ENCODE measurements at regions of chr3 and their contacts with region 1.

Region 1: DNA sequence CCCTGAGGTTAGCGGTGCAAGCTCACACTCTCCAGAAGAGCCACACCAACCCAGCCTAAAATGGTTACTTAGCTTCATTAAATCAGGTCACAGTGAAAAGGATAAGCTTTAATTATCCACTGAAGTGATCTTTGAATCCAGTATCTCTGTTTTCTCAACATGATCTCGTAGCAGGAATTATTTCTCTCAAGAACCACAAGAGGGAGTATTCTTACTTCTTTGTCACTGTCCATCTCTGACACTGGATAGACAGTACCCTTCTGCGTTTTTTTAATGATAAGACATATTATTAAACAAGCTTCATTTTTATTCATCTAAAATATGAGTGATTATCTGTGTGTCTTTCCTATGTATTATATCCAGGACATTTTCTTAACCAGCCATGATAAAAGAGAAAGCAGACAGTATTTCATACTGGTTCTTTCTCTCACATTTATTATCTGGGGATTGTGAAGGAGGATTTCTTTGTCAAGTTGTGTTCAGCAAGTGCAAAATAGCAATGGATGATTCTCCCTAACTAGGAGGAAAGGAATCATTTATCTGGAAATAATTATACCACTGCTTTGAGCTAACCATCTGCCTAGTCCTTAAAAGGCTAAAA is 105.4 kb upstream of the CCDC54 start:
- DNase-seq: no peak
- ATAC-seq: peak; percentile 50 to 56
- H3K4me3 ChIP-seq: no peak overlapping the region
- H3K27ac ChIP-seq: no peak overlapping the region
- H3K4me1 ChIP-seq: no peaks in the 10 kb centered on the region
- H3K27me3 ChIP-seq: no peaks in the 10 kb centered on the region

Region 2: GRCh38 chr3:107416145-107416544 is 144.3 kb after region 1 on chr3:
- intact Hi-C with region 1: loop called in 3 of 4 experiments (anchors 5 to 10 kb)
- DNase-seq: no peak
- ATAC-seq: no peak
- H3K4me3 ChIP-seq: no peak overlapping the region
- H3K27ac ChIP-seq: no peak overlapping the region
- H3K4me1 ChIP-seq: no peaks in the 10 kb centered on the region
- H3K27me3 ChIP-seq: no peaks in the 10 kb centered on the region

Region 3: DNA sequence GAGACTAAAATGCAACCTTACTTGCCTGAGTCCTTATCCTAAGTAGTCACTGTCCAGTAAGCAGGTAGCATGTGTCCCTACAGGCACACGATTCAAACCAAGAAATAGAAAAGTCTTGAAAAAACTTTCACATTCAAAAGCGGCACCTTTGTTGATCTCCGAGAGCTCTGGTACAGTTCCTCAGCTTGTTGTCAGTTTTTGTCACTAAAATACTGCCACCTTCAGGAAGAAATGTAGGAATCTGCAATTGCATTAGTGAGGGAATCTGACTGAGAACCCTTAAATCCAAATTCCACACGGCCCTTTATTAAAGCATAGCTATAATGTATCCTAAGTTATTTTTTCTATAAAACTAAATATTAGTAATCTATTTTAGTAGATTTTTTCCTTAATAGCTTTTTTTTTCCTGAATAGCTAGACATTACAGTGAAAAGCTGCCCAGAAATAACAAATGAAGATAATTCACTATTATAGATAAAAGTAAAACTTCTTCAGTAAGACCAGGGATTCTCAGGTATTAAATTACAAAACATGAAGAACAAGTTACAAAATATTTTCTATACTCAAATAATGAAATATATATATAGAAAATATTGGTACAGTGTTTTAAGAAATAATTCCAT is 149.4 kb after region 1 on chr3:
- intact Hi-C with region 1: loop called in 3 of 4 experiments (anchors 5 to 10 kb)
- DNase-seq: no peak
- ATAC-seq: peak; percentile 82 to 83
- H3K4me3 ChIP-seq: peak overlapping the region; percentile 47
- H3K27ac ChIP-seq: no peak overlapping the region
- H3K4me1 ChIP-seq: no peaks in the 10 kb centered on the region
- H3K27me3 ChIP-seq: no peaks in the 10 kb centered on the region